ENCODE measurements at regions of chr13 and their contacts with region 1.

Region 1: DNA sequence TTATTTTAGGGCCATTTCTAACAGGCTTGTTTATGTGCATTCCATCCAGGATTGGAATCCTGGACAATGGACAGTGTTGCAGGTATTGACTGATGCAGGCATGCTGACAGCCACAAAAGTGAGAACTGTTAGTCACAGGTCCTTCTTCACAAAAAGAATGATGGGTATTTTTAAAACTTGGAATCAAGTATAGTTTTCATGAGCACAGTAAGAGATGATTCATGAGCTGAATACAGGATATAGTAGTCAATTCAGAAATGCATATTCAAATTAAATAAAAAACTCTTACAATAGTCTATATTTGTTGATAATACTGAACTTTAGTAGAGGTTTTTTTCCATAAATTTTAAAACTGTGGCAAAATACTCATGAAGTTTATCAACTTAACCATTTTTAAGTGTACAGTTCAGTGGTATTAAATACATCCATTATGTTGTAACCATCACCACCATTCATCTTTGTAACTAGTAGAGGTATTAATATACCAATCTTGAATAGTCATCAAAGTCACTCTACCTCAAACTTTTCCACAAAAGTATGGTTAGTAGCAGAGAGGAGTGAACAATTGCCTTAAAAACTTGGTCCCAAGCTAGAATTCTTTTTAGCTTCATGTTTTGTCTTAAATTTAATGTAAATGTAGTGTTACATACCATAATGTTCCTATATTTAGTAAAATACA is 79.5 kb downstream of the KCNRG start:
- DNase-seq: no peak
- H3K4me3 Mint-ChIP-seq: no peak overlapping the region
- H3K27ac Mint-ChIP-seq: no peak overlapping the region
- H3K4me1 Mint-ChIP-seq: peaks cover 10% of the 10 kb centered on the region
- H3K27me3 Mint-ChIP-seq: no peaks in the 10 kb centered on the region

Region 2: GRCh38 chr13:49927755-49928154 is 167.0 kb before region 1 on chr13:
- intact Hi-C with region 1: no loop called
- DNase-seq: no peak
- H3K4me3 Mint-ChIP-seq: no peak overlapping the region
- H3K27ac Mint-ChIP-seq: no peak overlapping the region
- H3K4me1 Mint-ChIP-seq: peaks cover 4% of the 10 kb centered on the region
- H3K27me3 Mint-ChIP-seq: no peaks in the 10 kb centered on the region

Region 3: DNA sequence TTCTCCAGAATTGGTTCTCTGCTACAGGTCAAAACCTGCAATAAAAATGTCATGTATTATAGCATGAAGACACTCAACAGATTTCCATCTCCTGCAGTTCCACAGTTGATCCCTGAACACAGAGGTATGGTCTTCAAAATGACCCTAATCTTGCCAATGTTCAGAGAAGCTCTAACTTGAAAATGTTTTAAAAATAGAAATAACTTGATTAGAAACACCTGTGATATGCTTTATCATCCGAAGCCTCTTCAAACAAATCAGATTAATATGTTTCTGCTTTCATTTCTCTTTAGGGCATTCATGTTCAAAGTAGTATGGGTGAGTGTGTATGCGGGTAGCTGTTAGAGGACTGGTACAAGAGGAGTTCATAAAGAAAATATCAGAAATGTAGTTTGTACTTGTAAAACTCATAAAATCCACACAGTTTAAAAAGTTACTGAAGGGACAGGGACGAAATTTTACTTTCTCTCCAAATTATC is 19.1 kb before region 1 on chr13:
- intact Hi-C with region 1: no loop called
- DNase-seq: no peak
- H3K4me3 Mint-ChIP-seq: peak overlapping the region; percentile 40
- H3K27ac Mint-ChIP-seq: peak overlapping the region; percentile 19
- H3K4me1 Mint-ChIP-seq: peaks cover 58% of the 10 kb centered on the region
- H3K27me3 Mint-ChIP-seq: no peaks in the 10 kb centered on the region

Region 4: GRCh38 chr13:50140581-50141374 is 46.0 kb after region 1 on chr13:
- intact Hi-C with region 1: loop called (anchors 1 kb)
- DNase-seq: no peak
- H3K4me3 Mint-ChIP-seq: no peak overlapping the region
- H3K27ac Mint-ChIP-seq: no peak overlapping the region
- H3K4me1 Mint-ChIP-seq: peaks cover 8% of the 10 kb centered on the region
- H3K27me3 Mint-ChIP-seq: peaks cover 58% of the 10 kb centered on the region

Measured in activated T-helper 1 cell treated with anti-CD3 and anti-CD28 coated beads, Interleukin-12 subunit alpha, Interleukin-12 subunit beta, Interleukin-2, Interleukin-4 antibody, amounts not matched to agents 30 ng/mL and 10 ng/mL and 1 ng/mL, durations not matched to agents 14 hours and 24 hours and 36 hours (primary cell).